ENCODE measurements at regions of chr15 and their contacts with region 1.

Region 1: GRCh38 chr15:77538027-77538451 is 94.7 kb downstream of the LINGO1 start:
- DNase-seq: no peak
- H3K4me3 ChIP-seq: no peak overlapping the region
- CTCF ChIP-seq: no peak

Region 2: GRCh38 chr15:77526791-77527778 is 11.0 kb before region 1 on chr15:
- CTCF ChIA-PET with region 1: interaction called, 27 read pairs
- POLR2A ChIA-PET with region 1: no interaction called
- DNase-seq: no peak
- H3K4me3 ChIP-seq: no peak overlapping the region
- CTCF ChIP-seq: no peak

Region 3: GRCh38 chr15:77747175-77748077 is 209.4 kb after region 1 on chr15:
- CTCF ChIA-PET with region 1: no interaction called
- POLR2A ChIA-PET with region 1: no interaction called
- DNase-seq: no peak
- H3K4me3 ChIP-seq: no peak overlapping the region
- CTCF ChIP-seq: no peak